ENCODE measurements at regions of chr1 and their contacts with region 1.

Region 1: DNA sequence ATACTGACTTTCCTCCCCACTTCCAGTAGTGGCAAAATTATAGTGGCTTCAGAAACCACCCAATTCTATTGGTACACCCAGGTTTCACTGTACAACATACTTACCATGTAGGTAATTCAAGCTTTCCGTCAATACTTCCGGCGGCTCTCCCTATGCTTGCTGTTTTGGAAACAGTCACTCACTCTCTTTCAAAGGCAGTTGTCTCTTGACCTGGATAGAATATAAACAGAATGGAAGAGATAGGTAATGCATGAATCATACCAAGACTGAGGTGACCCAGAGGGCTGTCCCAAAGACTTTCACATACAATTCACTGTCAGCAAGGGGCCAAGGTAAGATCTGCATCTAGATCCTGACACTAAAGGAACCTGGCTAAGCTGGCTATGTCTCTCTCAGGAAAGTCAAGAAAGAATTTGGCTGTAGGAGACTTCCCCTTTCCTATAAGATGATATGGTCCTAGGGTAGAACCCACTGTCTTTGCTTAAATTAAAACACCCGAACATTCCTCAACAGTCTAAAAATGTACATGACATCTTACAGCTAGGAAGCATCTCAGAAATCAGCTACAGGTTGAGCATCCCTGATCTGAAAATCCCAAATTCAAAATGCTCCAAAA is 59.6 kb downstream of the LUZP1 start:
- DNase-seq: peak; percentile 45
- ATAC-seq: peak; percentile 12
- H3K4me3 Mint-ChIP-seq: no peak overlapping the region
- H3K27ac Mint-ChIP-seq: no peak overlapping the region
- H3K4me1 Mint-ChIP-seq: peaks cover 49% of the 10 kb centered on the region
- H3K27me3 Mint-ChIP-seq: no peaks in the 10 kb centered on the region
- CTCF ChIP-seq: no peak

Region 2: DNA sequence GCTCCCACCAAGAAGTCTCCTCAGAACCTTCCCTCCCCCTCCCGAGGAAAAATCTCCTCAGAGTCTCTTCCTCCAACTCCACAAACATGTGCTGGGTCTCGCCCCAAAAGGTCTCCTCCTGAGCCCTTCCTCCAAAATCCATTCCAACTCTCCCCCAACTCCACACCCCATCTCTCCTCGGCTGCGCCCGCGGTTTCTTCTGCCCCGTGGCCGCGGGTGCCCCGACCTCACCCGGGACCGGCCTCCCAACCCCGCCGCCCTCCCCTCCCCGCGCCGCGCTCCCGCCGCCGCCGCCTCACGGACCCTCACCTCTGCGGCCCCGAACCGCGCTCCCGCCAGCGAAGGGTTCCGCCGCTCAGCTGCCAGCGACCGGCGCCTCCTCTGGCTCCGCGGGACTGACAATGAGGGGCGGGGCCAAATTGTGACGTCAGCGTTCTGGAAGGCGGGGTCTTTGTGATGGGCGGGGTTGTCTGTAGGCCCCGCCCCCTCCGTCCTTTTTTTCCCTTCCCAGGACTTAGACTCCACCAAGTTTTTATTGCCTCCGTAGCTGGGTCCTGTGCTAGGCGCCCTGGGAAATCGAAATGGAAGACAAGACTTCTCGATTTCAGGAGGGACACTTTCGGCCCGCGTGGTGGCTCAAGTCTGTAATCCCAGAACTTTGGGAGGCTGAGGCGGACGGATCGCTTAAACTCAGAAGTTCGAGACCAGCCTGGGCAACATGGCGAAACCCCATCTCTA is 59.6 kb after region 1 on chr1 and contains the start of gene LUZP1:
- CTCF ChIA-PET with region 1: interaction called, 748 read pairs
- POLR2A ChIA-PET with region 1: interaction called, 11 read pairs
- intact Hi-C with region 1: no loop called
- DNase-seq: peak; percentile 90
- ATAC-seq: peak; percentile 92
- H3K4me3 Mint-ChIP-seq: peak within 1 kb of the TSS; percentile 97
- H3K27ac Mint-ChIP-seq: peak within 1 kb of the TSS; percentile 92
- H3K4me1 Mint-ChIP-seq: peaks cover 37% of the 10 kb centered on the region
- H3K27me3 Mint-ChIP-seq: no peaks in the 10 kb centered on the region
- CTCF ChIP-seq: no peak
- total RNA-seq, gene LUZP1: 14.9 to 16.0 TPM

Measured in activated CD8-positive, alpha-beta T cell treated with anti-CD3 and anti-CD28 coated beads for 36 hours (primary cell).